ENCODE measurements at regions of chr9 and their contacts with region 1.

Region 1: DNA sequence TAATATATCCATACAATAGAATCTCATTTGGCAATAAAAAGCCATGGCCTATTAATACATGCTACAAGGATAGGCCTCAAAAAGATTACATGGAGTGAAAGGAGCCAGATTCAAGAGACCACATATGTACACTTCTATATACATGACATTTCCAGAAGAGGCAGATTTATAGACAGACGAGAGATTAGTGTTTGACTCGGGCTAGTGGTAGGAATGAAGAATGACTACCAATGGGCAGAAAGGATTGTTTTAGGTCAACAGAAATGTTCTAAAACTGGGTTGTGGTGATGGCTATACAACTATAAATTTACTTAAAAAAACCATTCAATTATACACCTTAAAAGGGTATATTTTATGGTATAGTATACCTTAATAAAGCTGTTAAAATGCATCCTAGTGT is 41.9 kb downstream of the SETX start:
- DNase-seq: no peak
- H3K27ac ChIP-seq: no peak overlapping the region
- CTCF ChIP-seq: 0 out of 2 replicates have a peak, but pooled peaks have one; percentile 4

Region 2: GRCh38 chr9:132301521-132301920 is 11.4 kb before region 1 on chr9:
- CTCF ChIA-PET with region 1: no interaction called
- POLR2A ChIA-PET with region 1: interaction called, 17 read pairs
- DNase-seq: no peak
- H3K27ac ChIP-seq: no peak overlapping the region
- CTCF ChIP-seq: no peak